ENCODE measurements at regions of chr11 and their contacts with region 1.

Region 1: GRCh38 chr11:75195121-75195551 is 44.2 kb downstream of the SLCO2B1 start:
- DNase-seq: peak; percentile 49
- H3K4me3 Mint-ChIP-seq: no peak overlapping the region
- H3K27ac Mint-ChIP-seq: no peak overlapping the region
- H3K4me1 Mint-ChIP-seq: peaks cover 5% of the 10 kb centered on the region
- H3K27me3 Mint-ChIP-seq: peaks cover 14% of the 10 kb centered on the region
- CTCF ChIP-seq: no peak

Region 2: DNA sequence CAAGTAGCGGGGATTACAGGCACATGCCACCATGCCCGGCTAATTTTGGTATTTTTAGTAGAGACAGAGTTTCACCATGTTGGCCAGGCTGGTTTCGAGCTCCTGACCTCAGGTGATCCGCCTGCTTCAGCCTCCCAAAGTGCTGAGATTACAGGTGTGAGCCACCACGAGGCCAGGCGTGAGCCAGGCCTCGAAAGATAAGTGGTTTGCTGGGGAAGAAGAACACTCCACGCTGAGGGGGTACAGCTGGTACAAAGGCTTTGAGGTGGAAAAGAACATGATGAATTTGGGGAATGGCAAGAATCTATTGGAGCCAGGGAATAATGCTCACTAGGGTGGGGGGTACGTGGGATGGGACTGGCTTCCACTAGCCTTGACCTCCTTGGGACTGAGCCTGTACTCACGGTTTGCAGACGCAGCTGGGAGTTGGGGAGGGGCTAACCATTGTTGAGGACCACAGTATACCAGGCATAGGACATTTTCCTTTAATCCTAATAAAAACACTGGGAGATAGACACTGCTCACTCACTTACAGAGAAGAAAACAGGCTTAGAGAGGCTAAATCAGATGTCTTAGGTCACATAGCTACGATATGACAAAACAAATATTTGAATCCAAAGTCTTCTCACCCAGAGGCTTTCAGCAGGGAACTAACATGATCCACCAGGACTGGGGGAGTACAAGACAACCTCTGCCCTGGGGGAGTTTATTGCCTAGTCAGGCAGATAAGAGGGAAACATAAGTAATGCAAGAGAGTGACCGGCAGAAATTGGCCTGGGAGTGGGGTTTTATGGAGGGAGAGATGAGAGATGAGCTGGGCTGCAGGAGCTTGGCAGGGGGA is 39.3 kb before region 1 on chr11:
- CTCF ChIA-PET with region 1: interaction called, 4 read pairs
- POLR2A ChIA-PET with region 1: no interaction called
- intact Hi-C with region 1: loop called (anchors 5 kb)
- DNase-seq: no peak
- H3K4me3 Mint-ChIP-seq: no peak overlapping the region
- H3K27ac Mint-ChIP-seq: no peak overlapping the region
- H3K4me1 Mint-ChIP-seq: peaks cover 6% of the 10 kb centered on the region
- H3K27me3 Mint-ChIP-seq: peaks cover 22% of the 10 kb centered on the region
- CTCF ChIP-seq: no peak

Region 3: DNA sequence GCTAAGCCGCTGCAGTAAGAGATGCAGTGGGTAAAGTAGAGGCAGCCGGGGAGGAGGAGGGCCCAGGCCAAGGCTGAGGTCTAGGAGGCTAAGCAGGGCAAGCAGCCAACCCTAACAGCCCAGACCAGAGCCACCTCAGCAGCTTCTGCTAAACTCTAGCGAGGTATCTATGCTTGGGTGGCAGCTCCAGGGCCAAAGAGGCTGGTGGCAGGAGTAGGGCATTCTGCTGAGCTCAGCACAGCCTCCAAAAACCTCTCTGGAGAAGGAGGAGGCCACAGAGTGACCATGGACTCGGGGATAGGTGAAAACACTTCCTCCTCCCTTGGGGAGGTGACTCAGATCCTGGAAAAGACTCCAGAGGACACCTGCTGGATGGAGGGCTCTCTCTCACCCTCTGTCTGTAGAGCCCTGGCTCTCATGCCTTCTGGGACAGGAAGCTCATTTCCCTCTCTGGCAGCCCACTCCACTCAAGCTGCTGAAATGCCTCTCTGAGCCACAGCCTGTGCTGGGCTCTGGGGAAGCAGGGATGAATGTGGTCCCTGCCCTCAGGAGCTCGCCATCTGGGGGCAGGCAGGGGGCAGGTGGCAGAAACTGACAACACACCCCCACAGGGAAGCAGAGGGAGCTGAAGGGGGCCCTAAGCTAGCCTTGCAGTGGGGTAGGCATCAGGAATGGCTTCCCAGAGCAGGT is 29.0 kb after region 1 on chr11:
- CTCF ChIA-PET with region 1: no interaction called
- POLR2A ChIA-PET with region 1: no interaction called
- intact Hi-C with region 1: no loop called
- DNase-seq: no peak
- H3K4me3 Mint-ChIP-seq: no peak overlapping the region
- H3K27ac Mint-ChIP-seq: no peak overlapping the region
- H3K4me1 Mint-ChIP-seq: no peaks in the 10 kb centered on the region
- H3K27me3 Mint-ChIP-seq: peaks cover 22% of the 10 kb centered on the region
- CTCF ChIP-seq: no peak

Region 4: GRCh38 chr11:75236062-75236461 is 40.9 kb after region 1 on chr11:
- CTCF ChIA-PET with region 1: no interaction called
- POLR2A ChIA-PET with region 1: no interaction called
- intact Hi-C with region 1: no loop called
- DNase-seq: no peak
- H3K4me3 Mint-ChIP-seq: no peak overlapping the region
- H3K27ac Mint-ChIP-seq: no peak overlapping the region
- H3K4me1 Mint-ChIP-seq: no peaks in the 10 kb centered on the region
- H3K27me3 Mint-ChIP-seq: peaks cover 22% of the 10 kb centered on the region
- CTCF ChIP-seq: no peak